ENCODE measurements at regions of chr9 and their contacts with region 1.

Region 1: GRCh38 chr9:21465859-21466518 is 16.1 kb downstream of the IFNE start:
- DNase-seq: no peak
- H3K4me3 Mint-ChIP-seq: no peak overlapping the region
- H3K27ac Mint-ChIP-seq: no peak overlapping the region
- H3K4me1 Mint-ChIP-seq: peaks cover 2% of the 10 kb centered on the region
- H3K27me3 Mint-ChIP-seq: no peaks in the 10 kb centered on the region

Region 2: GRCh38 chr9:21434202-21435014 is 31.6 kb before region 1 on chr9:
- CTCF ChIA-PET with region 1: interaction called, 11 read pairs
- intact Hi-C with region 1: no loop called
- DNase-seq: peak; percentile 72
- H3K4me3 Mint-ChIP-seq: no peak overlapping the region
- H3K27ac Mint-ChIP-seq: no peak overlapping the region
- H3K4me1 Mint-ChIP-seq: no peaks in the 10 kb centered on the region
- H3K27me3 Mint-ChIP-seq: peaks cover 9% of the 10 kb centered on the region

Region 3: DNA sequence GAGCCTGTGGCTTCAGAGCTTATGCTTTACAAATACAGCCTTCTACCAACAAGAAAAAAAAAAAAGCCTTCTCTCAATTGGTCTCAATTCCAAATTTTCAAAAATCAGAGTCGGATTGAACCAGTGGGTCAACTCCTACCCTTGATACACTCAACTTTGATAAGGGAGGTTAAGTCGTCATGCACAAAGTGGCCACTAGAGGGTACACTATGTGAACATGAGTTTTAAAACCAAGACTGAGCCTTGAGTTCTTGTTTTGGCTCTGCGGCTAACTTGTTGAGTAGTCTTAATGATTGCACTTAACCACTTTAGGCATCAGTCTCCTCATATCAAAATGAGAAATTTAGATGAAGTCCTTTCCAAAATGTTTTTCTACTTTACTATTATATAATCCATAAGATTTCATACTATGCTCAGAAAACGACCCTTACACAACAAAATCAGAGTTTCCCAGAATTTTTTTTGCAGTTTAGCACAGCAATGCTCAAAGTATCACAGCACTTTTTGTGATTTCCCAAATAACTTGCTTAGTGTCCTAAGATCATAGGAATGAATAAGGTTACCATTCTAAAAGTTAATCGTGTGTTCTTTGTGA is 243.6 kb after region 1 on chr9:
- CTCF ChIA-PET with region 1: interaction called, 16 read pairs
- intact Hi-C with region 1: loop called (anchors 1 kb)
- DNase-seq: peak; percentile 86
- H3K4me3 Mint-ChIP-seq: no peak overlapping the region
- H3K27ac Mint-ChIP-seq: no peak overlapping the region
- H3K4me1 Mint-ChIP-seq: peaks cover 14% of the 10 kb centered on the region
- H3K27me3 Mint-ChIP-seq: no peaks in the 10 kb centered on the region

Region 4: DNA sequence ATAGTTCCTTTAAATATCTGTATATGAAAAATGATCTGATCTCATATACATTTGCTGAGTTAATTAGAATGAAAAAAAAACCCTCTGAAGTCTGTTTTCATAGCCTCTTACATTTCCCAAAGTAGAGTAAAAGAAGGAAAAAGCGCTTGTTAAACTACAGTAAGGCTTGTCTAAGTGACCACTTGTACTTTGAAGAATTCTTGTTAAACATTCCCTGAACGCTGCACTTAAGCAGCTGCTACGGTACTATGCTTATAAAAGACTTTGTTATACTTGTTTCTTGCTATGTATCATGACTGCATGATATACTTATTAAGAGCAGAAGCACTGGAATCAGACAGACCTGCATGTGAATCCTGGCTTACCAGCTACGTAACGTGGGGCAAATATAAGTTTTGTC is 254.8 kb after region 1 on chr9:
- CTCF ChIA-PET with region 1: no interaction called
- intact Hi-C with region 1: no loop called
- DNase-seq: no peak
- H3K4me3 Mint-ChIP-seq: no peak overlapping the region
- H3K27ac Mint-ChIP-seq: no peak overlapping the region
- H3K4me1 Mint-ChIP-seq: no peaks in the 10 kb centered on the region
- H3K27me3 Mint-ChIP-seq: peaks cover 8% of the 10 kb centered on the region

Region 5: GRCh38 chr9:21777701-21778100 is 311.7 kb after region 1 on chr9:
- CTCF ChIA-PET with region 1: interaction called, 11 read pairs
- intact Hi-C with region 1: no loop called
- DNase-seq: no peak
- H3K4me3 Mint-ChIP-seq: no peak overlapping the region
- H3K27ac Mint-ChIP-seq: no peak overlapping the region
- H3K4me1 Mint-ChIP-seq: peaks cover 3% of the 10 kb centered on the region
- H3K27me3 Mint-ChIP-seq: no peaks in the 10 kb centered on the region

Region 6: GRCh38 chr9:22244141-22245011 is 778.4 kb after region 1 on chr9:
- CTCF ChIA-PET with region 1: no interaction called
- intact Hi-C with region 1: loop called (anchors 5 kb)
- DNase-seq: peak; percentile 46
- H3K4me3 Mint-ChIP-seq: no peak overlapping the region
- H3K27ac Mint-ChIP-seq: no peak overlapping the region
- H3K4me1 Mint-ChIP-seq: peaks cover 29% of the 10 kb centered on the region
- H3K27me3 Mint-ChIP-seq: peaks cover 19% of the 10 kb centered on the region

Measured in activated naive CD4-positive, alpha-beta T cell treated with anti-CD3 and anti-CD28 coated beads for 36 hours (primary cell).